ENCODE measurements at regions of chr3 and their contacts with region 1.

Region 1: DNA sequence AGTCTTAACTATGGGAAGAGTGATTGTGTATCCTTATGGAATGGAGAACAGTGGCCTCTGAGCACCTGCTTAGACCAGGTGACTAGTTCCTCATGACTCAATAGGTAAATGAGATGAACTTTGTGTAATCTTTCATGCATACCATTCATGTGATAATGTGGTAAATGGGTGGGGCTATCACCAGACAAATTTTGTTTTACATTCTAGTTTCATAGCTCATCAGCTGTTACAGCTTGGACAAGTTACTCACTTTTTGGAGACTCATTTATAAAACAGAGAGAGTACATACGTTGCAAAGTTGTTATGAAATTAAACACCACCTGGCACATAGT is 103.7 kb upstream of the TGFBR2 start:
- DNase-seq: no peak

Region 2: GRCh38 chr3:30384546-30385072 is 118.1 kb before region 1 on chr3:
- intact Hi-C with region 1: no loop called
- DNase-seq: no peak

Region 3: DNA sequence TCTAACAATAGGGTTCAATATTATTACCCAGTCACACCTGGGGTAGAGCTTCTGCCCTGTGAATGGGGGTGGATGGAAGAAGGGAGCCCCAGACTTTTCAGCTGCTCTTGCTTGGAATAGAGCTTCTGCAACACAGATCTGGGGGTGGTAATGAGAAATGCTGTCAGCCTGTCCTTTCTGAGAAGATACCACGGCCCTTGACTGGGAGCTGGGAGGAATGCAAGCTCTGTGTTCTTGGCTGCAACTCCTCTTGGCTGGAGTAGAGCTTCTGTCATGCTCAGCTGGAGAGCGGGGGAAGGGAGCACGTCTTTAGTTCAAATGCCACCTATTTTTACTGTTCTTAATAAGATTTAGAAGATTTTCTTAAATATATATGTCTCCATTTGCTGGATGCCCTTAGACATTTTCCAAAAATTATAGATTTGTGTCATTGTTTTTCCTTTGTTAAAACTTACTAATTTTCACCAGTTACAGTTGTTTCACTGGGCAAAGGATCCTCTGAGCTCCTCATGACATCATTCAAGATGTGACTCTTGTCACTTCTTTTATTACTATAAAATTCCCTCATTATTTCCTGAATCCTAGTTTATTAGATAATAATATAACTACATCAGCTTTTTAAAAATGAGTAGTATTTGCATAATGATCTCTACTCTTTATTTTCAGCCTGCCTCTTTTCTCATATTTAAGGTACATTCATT is 76.3 kb before region 1 on chr3:
- intact Hi-C with region 1: loop called (anchors 10 kb)
- DNase-seq: peak in 3 of 10 donors; percentile 14 to 45 (median 25)

Region 4: DNA sequence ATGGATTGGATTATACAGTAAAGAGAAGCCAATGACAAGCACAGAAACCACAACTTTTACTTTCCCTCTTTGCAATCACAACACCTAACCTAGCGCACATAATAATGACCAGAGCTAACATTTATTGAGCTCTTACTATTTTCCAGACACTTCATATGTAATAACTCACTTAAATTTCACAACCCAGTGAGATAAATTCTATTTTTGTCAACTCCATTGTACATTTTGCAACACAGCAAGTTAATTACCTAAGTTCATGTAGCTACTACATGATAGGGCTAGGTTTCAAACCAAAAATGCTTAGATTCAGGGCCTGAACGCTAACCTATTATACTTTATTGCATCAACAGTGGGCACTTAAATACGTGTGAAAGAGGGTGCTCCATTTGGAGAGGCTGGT is 302.3 kb after region 1 on chr3:
- intact Hi-C with region 1: no loop called
- DNase-seq: no peak